Heart left ventricle (tissue), 16 donors: ENCODE measurements at regions of chr18 and their contacts with region 1.

Region 1: DNA sequence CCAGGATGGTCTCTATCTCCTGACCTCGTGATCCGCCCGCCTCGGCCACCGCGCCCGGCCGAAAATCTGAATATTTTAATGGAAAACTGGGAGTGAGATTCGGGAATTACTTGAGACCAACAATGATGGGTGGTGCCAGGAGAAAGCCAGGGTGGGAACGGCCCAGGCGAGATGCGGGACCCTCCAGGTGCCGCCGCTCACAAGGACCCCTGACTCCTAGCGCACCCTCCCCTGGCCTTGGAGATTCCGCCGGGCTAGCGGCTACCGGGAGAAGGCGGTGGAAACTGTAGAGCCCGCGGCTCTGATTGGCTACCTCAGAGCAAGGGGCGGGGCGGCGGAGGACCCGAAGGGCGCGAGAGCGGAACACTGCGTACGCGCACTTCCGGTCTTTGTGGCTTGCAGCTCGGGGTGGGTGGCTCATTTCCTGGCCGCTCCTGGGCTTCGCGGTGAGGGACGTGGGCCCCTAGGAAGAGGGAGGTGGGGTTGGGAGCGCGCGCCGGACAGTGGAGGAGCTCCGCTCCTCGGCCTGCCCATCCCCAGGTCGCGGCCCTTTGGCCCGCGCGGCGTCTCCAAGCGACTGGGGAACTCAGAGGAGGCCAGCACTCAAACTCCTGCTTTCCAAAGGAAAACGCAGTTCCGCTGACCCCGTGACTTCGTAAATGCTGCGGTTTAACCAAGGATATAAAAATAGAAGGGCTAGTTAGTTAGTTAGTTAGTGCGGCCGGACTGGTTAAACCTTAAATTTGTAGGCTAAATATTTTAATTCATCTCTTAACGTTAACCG is at the start of gene ZNF397:
- DNase-seq: peak; percentile 98 to 99 (median 99)
- ATAC-seq: peak; percentile 100
- H3K4me3 ChIP-seq: peak within 1 kb of the TSS; percentile 39 to 96 (median 82)
- H3K27ac ChIP-seq: peak within 1 kb of the TSS; percentile 93 to 99 (median 98)
- H3K4me1 ChIP-seq: peaks cover 0 to 17% (median 10%) of the 10 kb centered on the region in 12 donors
- H3K27me3 ChIP-seq: no peaks in the 10 kb centered on the region
- CTCF ChIP-seq: peak in 2 of 12 donors; percentile 3 to 9
- POLR2A ChIP-seq: peak; percentile 67 to 98
- total RNA-seq, gene ZNF397: 7.8 to 20.0 (median 13.8) TPM

Region 2: GRCh38 chr18:35040988-35041814 is 199.7 kb before region 1 on chr18 and contains the start of gene MAPRE2:
- intact Hi-C with region 1: loop called in 1 of 10 experiments (anchors 2 kb)
- DNase-seq: peak; percentile 99 to 100 (median 99)
- ATAC-seq: peak; percentile 93 to 97 (median 96)
- H3K4me3 ChIP-seq: peak within 1 kb of the TSS; percentile 66 to 96 (median 92)
- H3K27ac ChIP-seq: peak within 1 kb of the TSS; percentile 75 to 95 (median 89)
- H3K4me1 ChIP-seq: peaks cover 0 to 77% (median 37%) of the 10 kb centered on the region in 12 donors
- H3K27me3 ChIP-seq: no peaks in the 10 kb centered on the region
- CTCF ChIP-seq: peak in 2 of 12 donors; percentile 9 to 10
- POLR2A ChIP-seq: peak; percentile 92 to 98
- total RNA-seq, gene MAPRE2: 80.2 to 190 (median 137) TPM

Region 3: DNA sequence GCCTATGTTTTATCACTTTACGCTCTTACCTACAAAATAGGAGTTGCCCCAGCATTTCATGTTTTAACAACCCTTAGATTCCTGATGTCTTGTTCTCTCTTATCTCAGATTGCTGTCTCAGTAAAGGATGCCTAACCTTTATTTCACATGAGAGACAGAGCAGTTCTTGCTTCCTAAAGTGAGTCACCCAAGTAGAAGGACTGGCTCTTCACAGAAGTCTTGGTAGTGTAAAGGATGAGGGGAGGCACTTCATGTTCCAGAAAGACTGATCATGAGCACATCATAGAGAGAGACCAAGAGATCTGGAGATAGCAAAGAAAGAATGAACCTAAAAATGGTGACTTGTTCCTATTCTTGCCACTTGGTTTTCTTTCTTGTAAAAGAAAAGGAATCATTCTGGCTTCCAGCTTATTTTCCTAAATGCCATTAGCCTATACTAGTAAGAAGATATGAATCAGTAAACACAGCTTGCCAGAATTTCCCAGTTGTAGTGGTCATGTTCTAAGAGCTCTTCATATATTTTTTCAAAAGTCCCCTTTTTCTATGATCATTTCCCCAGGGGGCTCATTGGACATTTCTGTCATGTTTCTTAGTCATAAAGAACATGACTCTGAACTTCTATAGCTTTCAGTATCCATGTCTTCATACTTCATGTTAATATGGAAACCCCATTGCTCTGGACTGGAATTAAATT is 144.7 kb before region 1 on chr18:
- intact Hi-C with region 1: no loop called
- DNase-seq: no peak
- ATAC-seq: peak in 1 of 4 donors; percentile 28
- H3K4me3 ChIP-seq: no peak overlapping the region
- H3K27ac ChIP-seq: no peak overlapping the region
- H3K4me1 ChIP-seq: peaks cover 0 to 47% (median 3%) of the 10 kb centered on the region in 12 donors
- H3K27me3 ChIP-seq: no peaks in the 10 kb centered on the region
- CTCF ChIP-seq: no peak
- POLR2A ChIP-seq: no peak

Region 4: GRCh38 chr18:35267161-35267651 is 26.4 kb after region 1 on chr18:
- intact Hi-C with region 1: loop called in 3 of 10 experiments (anchors 1 to 2 kb)
- DNase-seq: peak; percentile 84 to 89 (median 86)
- ATAC-seq: peak; percentile 79 to 98 (median 96)
- H3K4me3 ChIP-seq: peak overlapping the region; percentile 57 to 92 (median 67)
- H3K27ac ChIP-seq: peak overlapping the region; percentile 48 to 93 (median 88)
- H3K4me1 ChIP-seq: peaks cover 0 to 10% (median 5%) of the 10 kb centered on the region in 12 donors
- H3K27me3 ChIP-seq: no peaks in the 10 kb centered on the region
- CTCF ChIP-seq: peak in 5 of 12 donors; percentile 8 to 25 (median 15)
- POLR2A ChIP-seq: peak in 1 of 2 donors; percentile 58

Region 5: GRCh38 chr18:35290073-35290735 is 49.3 kb after region 1 on chr18 and contains the start of gene ZSCAN30:
- intact Hi-C with region 1: loop called in 5 of 10 experiments (anchors 2 to 10 kb)
- DNase-seq: peak; percentile 95 to 98 (median 96)
- ATAC-seq: peak; percentile 99 to 100 (median 100)
- H3K4me3 ChIP-seq: peak within 1 kb of the TSS; percentile 61 to 97 (median 83)
- H3K27ac ChIP-seq: peak within 1 kb of the TSS; percentile 36 to 89 (median 82)
- H3K4me1 ChIP-seq: peaks cover 0 to 39% (median 20%) of the 10 kb centered on the region in 12 donors
- H3K27me3 ChIP-seq: no peaks in the 10 kb centered on the region
- CTCF ChIP-seq: no peak
- POLR2A ChIP-seq: peak in 1 of 2 donors; percentile 71
- total RNA-seq, gene ZSCAN30: 9.4 to 18.1 (median 13.8) TPM

Region 6: DNA sequence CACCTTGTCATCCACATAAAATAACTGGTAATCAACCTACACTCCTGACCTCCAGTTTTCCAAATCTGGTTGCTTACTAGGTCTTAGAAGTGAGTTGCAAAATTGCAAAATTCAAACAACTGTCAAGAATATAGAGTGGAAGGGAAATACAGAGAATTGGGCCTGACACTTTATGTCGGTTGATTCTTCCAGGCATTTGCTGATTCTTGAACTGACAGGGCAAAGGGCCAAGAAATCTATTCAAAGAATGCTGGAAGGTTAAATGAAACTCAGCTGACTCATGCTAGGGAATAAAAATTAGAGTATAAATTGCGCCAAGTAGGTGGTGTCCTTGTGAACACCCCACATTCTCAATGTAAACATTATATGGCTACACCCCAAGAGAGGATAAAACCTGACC is 70.6 kb after region 1 on chr18:
- intact Hi-C with region 1: loop called in 1 of 10 experiments (anchors 10 kb)
- DNase-seq: no peak
- ATAC-seq: no peak
- H3K4me3 ChIP-seq: no peak overlapping the region
- H3K27ac ChIP-seq: no peak overlapping the region
- H3K4me1 ChIP-seq: peaks cover 0 to 10% (median 0%) of the 10 kb centered on the region in 12 donors
- H3K27me3 ChIP-seq: no peaks in the 10 kb centered on the region
- CTCF ChIP-seq: no peak
- POLR2A ChIP-seq: no peak

Region 7: GRCh38 chr18:35343936-35344735 is 103.3 kb after region 1 on chr18 and contains the start of gene ZNF24:
- intact Hi-C with region 1: loop called in 5 of 10 experiments (anchors 1 to 5 kb)
- DNase-seq: peak; percentile 96 to 98 (median 97)
- ATAC-seq: peak; percentile 97 to 99 (median 98)
- H3K4me3 ChIP-seq: peak within 1 kb of the TSS; percentile 80 to 100 (median 98)
- H3K27ac ChIP-seq: peak within 1 kb of the TSS; percentile 97 to 100 (median 100)
- H3K4me1 ChIP-seq: peaks cover 5 to 56% (median 39%) of the 10 kb centered on the region in 12 donors
- H3K27me3 ChIP-seq: no peaks in the 10 kb centered on the region
- CTCF ChIP-seq: no peak
- POLR2A ChIP-seq: peak in 1 of 2 donors; percentile 57
- total RNA-seq, gene ZNF24: 32.3 to 53.3 (median 46.1) TPM

Region 8: GRCh38 chr18:35797961-35798360 is 557.1 kb after region 1 on chr18:
- intact Hi-C with region 1: no loop called
- DNase-seq: no peak
- ATAC-seq: no peak
- H3K4me3 ChIP-seq: no peak overlapping the region
- H3K27ac ChIP-seq: no peak overlapping the region
- H3K4me1 ChIP-seq: no peaks in the 10 kb centered on the region
- H3K27me3 ChIP-seq: no peaks in the 10 kb centered on the region
- CTCF ChIP-seq: no peak
- POLR2A ChIP-seq: no peak

Region 9: DNA sequence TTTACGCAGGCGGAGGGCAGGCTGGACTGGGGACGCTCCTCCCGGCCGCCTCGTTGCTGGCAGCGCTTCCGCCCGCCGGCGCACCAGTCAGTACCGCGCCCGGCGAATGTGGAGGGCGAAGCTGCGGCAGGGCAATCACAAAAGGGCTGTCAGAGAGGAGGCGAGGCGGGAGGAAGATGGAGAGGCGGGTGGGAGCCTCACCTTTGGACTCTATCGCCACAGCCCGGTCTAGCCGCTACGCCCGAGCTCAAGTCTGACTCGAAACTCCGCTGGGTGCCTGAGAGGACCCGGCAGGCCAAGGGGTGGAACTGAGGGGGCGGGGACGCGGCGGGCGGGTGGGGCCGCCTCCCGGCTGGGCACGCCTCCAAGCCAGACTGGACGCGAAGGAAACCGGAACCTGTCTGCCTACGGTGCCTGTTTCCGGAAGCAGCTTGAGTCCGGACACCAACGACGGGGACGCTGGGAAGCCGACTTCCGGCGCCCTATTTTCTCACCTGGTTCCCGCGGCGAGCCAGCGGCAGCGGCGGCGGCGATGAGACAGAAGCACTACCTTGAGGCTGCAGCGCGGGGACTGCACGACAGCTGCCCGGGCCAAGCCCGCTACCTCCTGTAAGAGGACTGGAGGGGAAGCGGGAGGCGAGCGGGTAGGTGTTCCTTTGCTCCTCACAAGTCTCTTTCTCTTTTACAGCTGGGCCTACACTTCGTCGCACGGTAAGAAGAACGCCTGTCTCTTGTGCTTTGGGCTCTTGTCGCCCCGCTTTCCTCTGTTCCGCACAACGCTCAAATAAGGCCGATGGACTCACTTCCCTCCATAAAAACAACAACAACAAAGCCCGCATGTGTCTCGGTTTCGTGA is 731.6 kb after region 1 on chr18 and contains the start of gene RMP24:
- intact Hi-C with region 1: loop called in 1 of 10 experiments (anchors 2 kb)
- DNase-seq: peak; percentile 95 to 96 (median 95)
- ATAC-seq: peak; percentile 93 to 97 (median 97)
- H3K4me3 ChIP-seq: peak within 1 kb of the TSS; percentile 67 to 96 (median 90)
- H3K27ac ChIP-seq: peak within 1 kb of the TSS; percentile 55 to 98 (median 88)
- H3K4me1 ChIP-seq: peaks cover 0 to 41% (median 13%) of the 10 kb centered on the region in 12 donors
- H3K27me3 ChIP-seq: no peaks in the 10 kb centered on the region
- CTCF ChIP-seq: peak in 1 of 12 donors; percentile 5
- POLR2A ChIP-seq: peak in 1 of 2 donors; percentile 72